ENCODE measurements at regions of chr5 and their contacts with region 1.

Region 1: GRCh38 chr5:132943362-132944022 is 19.9 kb downstream of the AFF4 start:
- DNase-seq: no peak
- H3K4me3 ChIP-seq: no peak overlapping the region
- H3K27ac ChIP-seq: no peak overlapping the region
- H3K4me1 ChIP-seq: no peaks in the 10 kb centered on the region
- H3K27me3 ChIP-seq: no peaks in the 10 kb centered on the region
- CTCF ChIP-seq: no peak

Region 2: DNA sequence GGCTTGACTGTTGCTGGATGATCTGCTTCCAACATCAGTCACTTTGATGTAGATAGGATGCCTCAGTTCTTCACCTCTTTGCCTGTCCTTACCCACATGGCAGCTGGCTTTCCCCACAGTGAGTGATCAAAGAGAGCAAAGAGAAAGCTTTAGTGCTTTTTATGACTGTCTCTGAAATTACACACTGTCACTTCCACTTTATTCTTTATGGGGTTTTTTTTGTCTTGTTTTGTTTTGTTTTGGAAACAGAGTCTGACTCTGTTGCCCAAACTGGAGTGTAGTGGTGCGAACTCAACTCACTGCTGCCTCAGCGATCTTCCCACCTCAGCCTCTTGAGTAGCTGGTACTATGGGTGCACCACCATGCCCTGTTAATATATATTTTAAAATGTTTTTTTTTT is 1869.9 kb after region 1 on chr5:
- CTCF ChIA-PET with region 1: no interaction called
- POLR2A ChIA-PET with region 1: interaction called, 12 read pairs
- intact Hi-C with region 1: no loop called
- DNase-seq: no peak
- H3K4me3 ChIP-seq: no peak overlapping the region
- H3K27ac ChIP-seq: no peak overlapping the region
- H3K4me1 ChIP-seq: no peaks in the 10 kb centered on the region
- H3K27me3 ChIP-seq: no peaks in the 10 kb centered on the region
- CTCF ChIP-seq: no peak

Measured in A673 (cell line).